ENCODE measurements at regions of chr15 and their contacts with region 1.

Region 1: DNA sequence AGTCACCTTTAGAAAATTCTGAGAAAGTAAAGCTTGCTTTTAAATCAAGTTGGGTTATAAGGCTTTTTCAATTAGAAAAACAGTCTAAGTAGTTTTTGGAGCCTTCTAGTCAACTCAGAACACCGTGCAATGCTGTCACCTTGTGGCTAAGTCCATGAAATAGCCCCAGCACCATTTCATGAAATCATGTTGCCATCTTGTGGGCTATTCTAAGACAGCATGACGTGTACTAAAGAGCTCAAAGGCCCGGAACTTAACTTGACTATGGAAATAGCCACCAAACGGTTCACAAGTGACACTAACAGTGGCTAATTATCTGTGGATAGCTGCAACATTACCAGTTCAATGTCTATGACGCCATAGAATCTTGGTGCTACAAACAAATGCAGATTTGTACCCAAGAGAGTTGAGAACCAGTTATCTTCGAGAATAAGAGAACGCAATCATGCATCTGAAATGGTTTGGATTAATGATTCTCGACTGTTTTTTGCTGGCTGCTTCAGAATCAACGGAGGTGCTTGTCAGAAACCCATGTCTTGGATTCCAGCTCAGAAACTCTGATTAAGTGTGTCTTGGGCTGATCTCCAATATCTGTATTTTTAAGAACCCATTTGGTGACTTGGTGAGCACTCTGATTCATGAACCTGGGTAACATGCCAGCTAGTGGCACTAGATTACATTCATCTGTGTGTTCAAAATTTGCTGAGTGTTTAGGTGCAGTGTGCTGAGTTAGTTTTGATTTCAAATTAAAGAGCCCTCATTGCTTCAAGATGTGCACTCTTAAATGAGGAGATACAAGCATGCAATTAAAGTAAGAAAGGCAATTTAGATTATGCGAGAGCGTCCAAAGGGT is 111.2 kb upstream of the MCTP2 start:
- DNase-seq: peak; percentile 66 to 75
- H3K4me3 ChIP-seq: no peak overlapping the region
- H3K4me3 Mint-ChIP-seq: no peak overlapping the region
- H3K27ac Mint-ChIP-seq: no peak overlapping the region
- H3K4me1 ChIP-seq: peaks cover 8% of the 10 kb centered on the region
- H3K4me1 Mint-ChIP-seq: peaks cover 5% of the 10 kb centered on the region
- H3K27me3 ChIP-seq: no peaks in the 10 kb centered on the region
- H3K27me3 Mint-ChIP-seq: peaks cover 2% of the 10 kb centered on the region
- CTCF ChIP-seq: peak; percentile 93 to 95

Region 2: DNA sequence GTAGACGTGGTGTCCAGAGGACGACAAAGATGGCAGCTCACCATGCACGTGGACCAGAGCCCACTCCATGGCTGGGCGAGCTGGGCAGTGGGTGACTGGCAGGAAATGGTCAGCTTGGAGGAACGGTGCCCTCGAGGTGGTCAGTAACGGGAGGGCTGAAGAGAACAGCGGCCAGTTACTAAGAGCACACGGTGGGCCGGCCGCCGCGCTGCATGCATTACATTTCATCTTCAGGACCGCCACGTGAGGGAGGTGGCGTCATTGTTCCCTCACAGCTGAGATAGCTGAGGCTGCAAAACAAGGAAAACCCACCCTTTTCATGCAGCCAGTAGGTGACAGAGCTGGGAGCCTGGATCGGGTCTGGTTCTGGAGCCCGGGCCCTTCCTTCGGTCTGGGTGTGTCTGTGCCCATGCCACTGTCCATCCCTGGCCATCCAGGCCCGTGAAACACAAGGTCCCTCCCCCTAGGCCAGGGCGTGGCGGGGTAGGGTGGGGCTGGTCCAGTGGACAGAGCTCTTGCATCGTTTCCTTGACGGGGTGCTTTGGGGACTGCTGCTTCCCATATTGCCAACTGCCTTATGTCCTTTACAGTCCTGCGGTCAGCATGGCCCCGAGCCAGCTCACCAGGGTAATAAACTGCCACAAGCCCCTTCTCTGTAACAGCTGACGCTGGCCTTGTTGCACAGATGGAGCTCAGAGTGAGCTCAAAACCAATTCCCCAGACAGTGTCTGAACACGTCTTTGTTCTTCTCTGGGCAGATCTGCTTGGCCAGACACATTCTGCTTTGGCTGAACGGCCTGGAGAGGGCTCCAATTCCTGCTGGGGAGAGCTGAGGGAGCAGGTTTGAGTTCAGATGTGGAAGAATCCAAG is 1083.0 kb before region 1 on chr15:
- CTCF ChIA-PET with region 1: interaction called, 8 read pairs
- POLR2A ChIA-PET with region 1: no interaction called
- intact Hi-C with region 1: loop called (anchors 1 kb)
- DNase-seq: peak; percentile 29 to 37
- H3K4me3 ChIP-seq: no peak overlapping the region
- H3K4me3 Mint-ChIP-seq: no peak overlapping the region
- H3K27ac Mint-ChIP-seq: no peak overlapping the region
- H3K4me1 ChIP-seq: no peaks in the 10 kb centered on the region
- H3K4me1 Mint-ChIP-seq: no peaks in the 10 kb centered on the region
- H3K27me3 ChIP-seq: no peaks in the 10 kb centered on the region
- H3K27me3 Mint-ChIP-seq: no peaks in the 10 kb centered on the region
- CTCF ChIP-seq: no peak

Region 3: GRCh38 chr15:93617443-93617842 is 502.7 kb before region 1 on chr15:
- CTCF ChIA-PET with region 1: no interaction called
- POLR2A ChIA-PET with region 1: no interaction called
- intact Hi-C with region 1: loop called (anchors 10 kb)
- DNase-seq: peak in 1 of 2 experiments; percentile 5
- H3K4me3 ChIP-seq: no peak overlapping the region
- H3K4me3 Mint-ChIP-seq: no peak overlapping the region
- H3K27ac Mint-ChIP-seq: no peak overlapping the region
- H3K4me1 ChIP-seq: no peaks in the 10 kb centered on the region
- H3K4me1 Mint-ChIP-seq: no peaks in the 10 kb centered on the region
- H3K27me3 ChIP-seq: no peaks in the 10 kb centered on the region
- H3K27me3 Mint-ChIP-seq: peaks cover 20% of the 10 kb centered on the region
- CTCF ChIP-seq: peak in 1 of 2 experiments; percentile 35

Region 4: DNA sequence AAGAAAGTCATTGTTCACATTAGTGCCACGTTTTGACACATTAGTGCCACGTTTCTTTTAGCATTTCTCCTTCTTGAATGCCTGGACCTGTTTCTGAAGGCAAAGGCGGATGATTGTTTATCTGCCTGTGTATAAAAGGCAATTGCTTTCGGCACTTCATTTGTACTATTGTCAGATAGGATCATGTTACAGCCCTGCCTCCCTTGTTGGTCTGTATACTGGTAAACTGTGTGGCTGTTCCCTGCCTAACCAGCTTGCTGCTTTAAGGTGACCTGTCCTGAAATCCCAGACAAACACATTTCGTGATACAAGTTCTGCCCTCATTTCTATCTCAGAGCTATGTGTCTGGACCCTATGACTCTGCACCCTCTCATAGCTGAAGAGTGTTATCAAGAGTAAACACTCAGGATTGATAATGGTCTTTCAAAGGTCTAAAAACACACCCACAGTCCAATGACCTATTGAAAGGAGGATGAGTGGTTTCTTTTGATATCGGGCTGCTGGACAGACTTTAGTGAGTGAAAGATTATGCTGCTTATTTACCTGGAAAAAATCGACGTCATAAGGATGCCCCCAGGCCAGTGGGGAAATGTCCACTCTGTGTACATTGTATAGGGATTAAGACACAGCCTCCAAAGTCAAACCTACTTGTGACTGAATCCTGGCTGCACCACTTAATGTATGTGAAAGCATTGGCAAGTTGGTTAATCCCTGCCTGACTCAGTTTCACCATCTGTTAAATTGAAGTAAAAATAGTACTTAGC is 165.0 kb before region 1 on chr15:
- CTCF ChIA-PET with region 1: interaction called, 18 read pairs
- POLR2A ChIA-PET with region 1: no interaction called
- intact Hi-C with region 1: no loop called
- DNase-seq: peak; percentile 84 to 85
- H3K4me3 ChIP-seq: no peak overlapping the region
- H3K4me3 Mint-ChIP-seq: peak overlapping the region; percentile 64
- H3K27ac Mint-ChIP-seq: peak overlapping the region; percentile 50
- H3K4me1 ChIP-seq: peaks cover 17% of the 10 kb centered on the region
- H3K4me1 Mint-ChIP-seq: peaks cover 21% of the 10 kb centered on the region
- H3K27me3 ChIP-seq: no peaks in the 10 kb centered on the region
- H3K27me3 Mint-ChIP-seq: no peaks in the 10 kb centered on the region
- CTCF ChIP-seq: no peak

Region 5: DNA sequence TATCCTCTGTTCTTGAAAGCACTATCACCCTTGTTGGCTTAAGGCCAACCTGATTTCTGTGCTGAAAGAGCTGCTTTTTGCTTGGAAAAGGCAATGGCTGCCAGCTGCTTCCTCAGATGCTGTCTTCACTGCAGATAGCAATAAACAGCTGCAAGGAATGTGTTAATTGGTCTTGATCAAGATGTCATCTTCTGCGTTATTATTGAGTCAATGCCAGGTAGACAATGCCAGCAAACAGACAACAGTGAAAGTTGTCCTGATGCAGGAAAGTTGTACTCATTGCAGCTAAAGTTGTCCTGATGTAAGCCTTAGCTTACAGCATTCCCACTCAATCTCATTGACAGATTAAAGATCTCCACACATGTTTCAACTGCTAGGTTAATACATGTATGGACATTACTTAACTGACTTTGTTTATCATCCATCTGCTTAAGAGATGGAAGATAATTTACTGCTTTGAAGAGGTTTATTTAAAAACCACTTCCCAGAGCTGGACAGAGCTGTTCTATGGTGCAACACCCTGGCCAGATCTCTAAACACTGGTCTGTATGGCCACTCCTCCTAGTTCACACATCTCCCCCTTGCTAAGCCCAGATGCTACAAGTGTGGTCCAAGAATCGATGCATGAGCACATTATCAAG is 139.8 kb before region 1 on chr15:
- CTCF ChIA-PET with region 1: interaction called, 51 read pairs
- POLR2A ChIA-PET with region 1: no interaction called
- intact Hi-C with region 1: loop called (anchors 1 kb)
- DNase-seq: no peak
- H3K4me3 ChIP-seq: no peak overlapping the region
- H3K4me3 Mint-ChIP-seq: no peak overlapping the region
- H3K27ac Mint-ChIP-seq: no peak overlapping the region
- H3K4me1 ChIP-seq: no peaks in the 10 kb centered on the region
- H3K4me1 Mint-ChIP-seq: no peaks in the 10 kb centered on the region
- H3K27me3 ChIP-seq: no peaks in the 10 kb centered on the region
- H3K27me3 Mint-ChIP-seq: peaks cover 8% of the 10 kb centered on the region
- CTCF ChIP-seq: no peak

Region 6: DNA sequence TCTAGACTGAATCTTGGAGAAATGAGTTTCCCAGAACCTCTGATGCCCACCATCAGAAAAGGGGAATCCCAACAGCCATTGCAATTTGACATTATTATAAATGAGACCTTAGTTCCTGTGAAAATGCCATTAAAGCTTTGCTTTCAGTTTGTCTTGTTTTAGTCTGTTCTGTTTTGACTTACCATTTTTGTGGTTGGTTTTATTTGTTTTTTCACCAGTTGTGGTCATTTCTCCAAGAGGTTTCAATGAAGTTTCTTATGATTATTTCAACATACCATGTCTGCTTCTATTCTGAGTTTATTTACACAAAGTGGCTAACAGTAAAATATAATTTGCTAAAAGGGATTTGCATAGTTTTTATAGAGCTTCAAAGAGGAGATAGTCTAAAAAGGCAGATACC is 63.8 kb before region 1 on chr15:
- CTCF ChIA-PET with region 1: no interaction called
- POLR2A ChIA-PET with region 1: no interaction called
- intact Hi-C with region 1: no loop called
- DNase-seq: no peak
- H3K4me3 ChIP-seq: no peak overlapping the region
- H3K4me3 Mint-ChIP-seq: no peak overlapping the region
- H3K27ac Mint-ChIP-seq: no peak overlapping the region
- H3K4me1 ChIP-seq: 0 out of 2 replicates have a peak, but pooled peaks cover 4% of the 10 kb centered on the region
- H3K4me1 Mint-ChIP-seq: peaks cover 19% of the 10 kb centered on the region
- H3K27me3 ChIP-seq: no peaks in the 10 kb centered on the region
- H3K27me3 Mint-ChIP-seq: no peaks in the 10 kb centered on the region
- CTCF ChIP-seq: no peak

Region 7: DNA sequence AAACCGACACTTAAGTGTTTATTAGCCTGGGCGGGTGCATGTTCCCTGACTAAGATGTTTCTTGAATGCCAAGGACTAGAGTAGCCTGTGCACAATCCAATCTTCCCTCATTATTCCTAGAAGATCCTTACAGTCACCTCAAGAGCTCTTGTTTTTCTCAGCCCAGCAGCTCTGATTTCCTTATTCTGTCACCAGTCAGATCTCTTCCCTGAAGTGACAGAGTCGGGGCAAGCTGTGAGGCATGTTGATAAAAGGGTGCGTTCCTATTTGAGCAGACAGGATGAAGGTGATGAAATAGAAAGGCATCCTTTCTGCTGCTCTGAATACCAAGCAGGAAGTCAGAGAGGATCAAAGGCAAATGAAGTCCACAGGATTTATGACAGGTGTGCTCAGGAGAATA is 14.4 kb before region 1 on chr15:
- CTCF ChIA-PET with region 1: interaction called, 17 read pairs
- POLR2A ChIA-PET with region 1: no interaction called
- intact Hi-C with region 1: loop called (anchors 1 kb)
- DNase-seq: peak; percentile 83 to 87
- H3K4me3 ChIP-seq: no peak overlapping the region
- H3K4me3 Mint-ChIP-seq: peak overlapping the region; percentile 56
- H3K27ac Mint-ChIP-seq: peak overlapping the region; percentile 89
- H3K4me1 ChIP-seq: peaks cover 29% of the 10 kb centered on the region
- H3K4me1 Mint-ChIP-seq: peaks cover 35% of the 10 kb centered on the region
- H3K27me3 ChIP-seq: no peaks in the 10 kb centered on the region
- H3K27me3 Mint-ChIP-seq: no peaks in the 10 kb centered on the region
- CTCF ChIP-seq: no peak